Heart right ventricle (tissue), 16 donors: ENCODE measurements at regions of chr13 and their contacts with region 1.

Region 1: GRCh38 chr13:99977912-99978798 is 3.4 kb upstream of the ZIC2 start:
- DNase-seq: no peak
- ATAC-seq: no peak
- H3K4me3 ChIP-seq: no peak overlapping the region
- H3K27ac ChIP-seq: no peak overlapping the region
- H3K4me1 ChIP-seq: peaks cover 10 to 45% (median 28%) of the 10 kb centered on the region in 9 donors
- H3K27me3 ChIP-seq: peaks cover 80 to 100% (median 100%) of the 10 kb centered on the region in 7 donors
- CTCF ChIP-seq: no peak

Region 2: GRCh38 chr13:99774659-99775058 is 203.5 kb before region 1 on chr13:
- intact Hi-C with region 1: no loop called
- DNase-seq: no peak
- ATAC-seq: no peak
- H3K4me3 ChIP-seq: no peak overlapping the region
- H3K27ac ChIP-seq: no peak overlapping the region
- H3K4me1 ChIP-seq: no peaks in the 10 kb centered on the region
- H3K27me3 ChIP-seq: no peaks in the 10 kb centered on the region
- CTCF ChIP-seq: no peak

Region 3: GRCh38 chr13:99938635-99939034 is 39.5 kb before region 1 on chr13:
- intact Hi-C with region 1: loop called in 1 of 10 experiments (anchors 2 kb)
- DNase-seq: no peak
- ATAC-seq: no peak
- H3K4me3 ChIP-seq: no peak overlapping the region
- H3K27ac ChIP-seq: no peak overlapping the region
- H3K4me1 ChIP-seq: no peaks in the 10 kb centered on the region
- H3K27me3 ChIP-seq: peaks cover 0 to 77% (median 61%) of the 10 kb centered on the region in 7 donors
- CTCF ChIP-seq: no peak